A673 (cell line): ENCODE measurements at regions of chr12 and their contacts with region 1.

Region 1: GRCh38 chr12:107903341-107904061 is 129.0 kb downstream of the ASCL4 start:
- DNase-seq: peak; percentile 28
- H3K4me3 ChIP-seq: peak overlapping the region; percentile 28
- H3K27ac ChIP-seq: no peak overlapping the region
- H3K4me1 ChIP-seq: no peaks in the 10 kb centered on the region
- H3K27me3 ChIP-seq: peaks cover 94% of the 10 kb centered on the region
- CTCF ChIP-seq: no peak

Region 2: DNA sequence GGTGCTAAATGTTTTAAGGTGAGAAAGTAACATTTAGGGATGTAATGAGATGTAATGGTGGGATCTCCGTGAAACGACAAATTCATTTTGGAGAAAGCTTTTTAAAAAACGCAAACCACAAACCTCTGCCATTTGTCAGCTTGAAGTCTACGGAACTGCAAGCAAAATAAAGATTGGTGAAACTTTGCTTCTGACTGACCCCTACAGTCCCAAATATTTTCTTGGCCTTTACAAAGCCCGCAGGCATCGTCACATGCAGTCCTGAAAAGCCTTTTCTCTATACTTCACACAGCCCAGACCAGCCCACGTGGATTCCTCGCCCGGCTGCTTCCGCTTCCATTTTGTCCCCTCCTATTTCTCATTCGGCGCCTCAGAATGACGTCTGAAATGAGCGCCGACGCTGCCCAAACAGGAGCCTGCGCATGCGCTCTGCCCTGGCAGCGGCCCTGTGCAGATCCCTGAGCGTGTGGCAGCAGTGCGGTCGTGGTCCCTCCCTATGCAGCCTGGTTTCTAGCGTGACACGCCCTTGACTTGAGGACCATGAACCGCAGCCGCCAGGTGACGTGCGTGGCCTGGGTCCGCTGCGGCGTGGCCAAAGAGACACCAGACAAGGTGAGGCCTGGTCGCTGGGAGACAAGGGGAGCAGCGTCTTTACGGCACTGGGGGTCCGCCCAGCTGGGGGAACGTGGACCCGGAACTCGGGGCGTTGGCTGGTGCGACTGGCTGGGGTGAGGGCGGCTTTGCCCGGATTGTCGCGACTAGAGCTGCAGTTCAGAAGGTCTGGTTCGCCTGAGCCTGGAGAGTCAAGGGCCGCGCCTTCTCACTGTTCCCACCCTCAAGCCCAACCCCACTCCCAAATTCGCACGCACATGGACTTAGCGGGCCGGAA is 217.9 kb before region 1 on chr12 and contains the start of gene PWP1:
- CTCF ChIA-PET with region 1: no interaction called
- POLR2A ChIA-PET with region 1: no interaction called
- intact Hi-C with region 1: no loop called
- DNase-seq: peak; percentile 97
- H3K4me3 ChIP-seq: peak within 1 kb of the TSS; percentile 77
- H3K27ac ChIP-seq: peak within 1 kb of the TSS; percentile 79
- H3K4me1 ChIP-seq: peaks cover 11% of the 10 kb centered on the region
- H3K27me3 ChIP-seq: no peaks in the 10 kb centered on the region
- CTCF ChIP-seq: no peak
- total RNA-seq, gene PWP1: 74.7 and 77.7 TPM in 2 replicates

Region 3: DNA sequence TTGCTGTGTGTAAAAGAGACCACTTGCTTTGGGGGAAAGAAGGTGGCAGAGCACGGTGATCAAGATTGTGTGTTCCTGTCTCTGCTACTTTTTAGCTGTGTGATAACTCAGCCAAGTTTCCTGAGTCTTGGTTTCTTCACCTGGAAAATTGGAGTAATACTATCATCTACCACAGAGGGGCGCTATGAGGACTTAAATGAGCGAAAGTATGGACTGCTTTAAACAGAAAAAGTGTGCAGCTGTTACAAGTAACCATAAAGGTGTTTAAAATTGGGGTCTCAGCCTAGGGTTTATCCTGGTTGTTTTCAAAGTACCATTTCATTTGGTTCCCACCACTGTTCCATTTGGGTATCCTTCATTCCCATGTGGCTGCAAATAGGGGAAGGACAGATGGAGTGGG is 159.7 kb after region 1 on chr12:
- CTCF ChIA-PET with region 1: no interaction called
- POLR2A ChIA-PET with region 1: interaction called, 10 read pairs
- intact Hi-C with region 1: no loop called
- DNase-seq: peak; percentile 57
- H3K4me3 ChIP-seq: no peak overlapping the region
- H3K27ac ChIP-seq: no peak overlapping the region
- H3K4me1 ChIP-seq: no peaks in the 10 kb centered on the region
- H3K27me3 ChIP-seq: peaks cover 5% of the 10 kb centered on the region
- CTCF ChIP-seq: peak; percentile 72